ENCODE measurements at regions of chr3 and their contacts with region 1.

Region 1: DNA sequence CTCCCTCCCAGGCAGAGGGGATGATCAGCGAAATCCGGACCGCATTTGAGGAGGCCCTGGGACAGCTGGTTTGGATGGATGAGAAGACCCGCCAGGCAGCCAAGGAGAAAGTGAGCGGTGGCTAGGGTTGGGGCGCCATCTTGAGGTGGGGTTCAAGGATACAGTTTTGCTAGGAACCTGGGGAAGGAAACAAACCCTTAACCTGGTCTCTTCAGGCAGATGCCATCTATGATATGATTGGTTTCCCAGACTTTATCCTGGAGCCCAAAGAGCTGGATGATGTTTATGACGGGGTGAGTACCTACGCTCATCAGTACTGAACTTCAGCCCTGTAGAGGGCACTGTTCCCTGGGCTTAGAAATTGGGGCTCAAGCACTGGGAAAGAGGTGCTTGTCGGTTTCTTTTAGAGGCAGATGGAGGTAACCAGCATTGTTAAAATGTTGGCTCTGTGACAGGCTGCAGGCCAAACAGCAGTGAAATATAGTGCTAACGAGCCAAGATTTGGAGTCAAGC is 9.6 kb upstream of the PSMD2 start:
- DNase-seq: peak in 13 of 14 experiments; percentile 42 to 71 (median 50)
- ATAC-seq: peak; percentile 77
- H3K4me3 ChIP-seq: no peak overlapping the region
- H3K4me3 Mint-ChIP-seq: no peak overlapping the region
- H3K27ac ChIP-seq: no peak overlapping the region
- H3K27ac Mint-ChIP-seq: no peak overlapping the region
- H3K4me1 ChIP-seq: peaks cover 5% of the 10 kb centered on the region
- H3K4me1 Mint-ChIP-seq: no peaks in the 10 kb centered on the region
- H3K27me3 ChIP-seq: peaks cover 3% of the 10 kb centered on the region in 2 experiments
- H3K27me3 Mint-ChIP-seq: peaks cover 28% of the 10 kb centered on the region
- CTCF ChIP-seq: peak; percentile 68

Region 2: GRCh38 chr3:183895296-183895695 is 394.2 kb before region 1 on chr3:
- CTCF ChIA-PET with region 1: interaction called, 6 read pairs
- POLR2A ChIA-PET with region 1: no interaction called
- intact Hi-C with region 1: loop called (anchors 2 kb)
- DNase-seq: peak in 9 of 14 experiments; percentile 6 to 76 (median 20)
- ATAC-seq: peak; percentile 88
- H3K4me3 ChIP-seq: no peak overlapping the region
- H3K4me3 Mint-ChIP-seq: no peak overlapping the region
- H3K27ac ChIP-seq: no peak overlapping the region
- H3K27ac Mint-ChIP-seq: no peak overlapping the region
- H3K4me1 ChIP-seq: peaks cover 4% of the 10 kb centered on the region
- H3K4me1 Mint-ChIP-seq: no peaks in the 10 kb centered on the region
- H3K27me3 ChIP-seq: peaks cover 5 to 6% of the 10 kb centered on the region in 2 experiments
- H3K27me3 Mint-ChIP-seq: peaks cover 13% of the 10 kb centered on the region
- CTCF ChIP-seq: peak; percentile 75

Region 3: DNA sequence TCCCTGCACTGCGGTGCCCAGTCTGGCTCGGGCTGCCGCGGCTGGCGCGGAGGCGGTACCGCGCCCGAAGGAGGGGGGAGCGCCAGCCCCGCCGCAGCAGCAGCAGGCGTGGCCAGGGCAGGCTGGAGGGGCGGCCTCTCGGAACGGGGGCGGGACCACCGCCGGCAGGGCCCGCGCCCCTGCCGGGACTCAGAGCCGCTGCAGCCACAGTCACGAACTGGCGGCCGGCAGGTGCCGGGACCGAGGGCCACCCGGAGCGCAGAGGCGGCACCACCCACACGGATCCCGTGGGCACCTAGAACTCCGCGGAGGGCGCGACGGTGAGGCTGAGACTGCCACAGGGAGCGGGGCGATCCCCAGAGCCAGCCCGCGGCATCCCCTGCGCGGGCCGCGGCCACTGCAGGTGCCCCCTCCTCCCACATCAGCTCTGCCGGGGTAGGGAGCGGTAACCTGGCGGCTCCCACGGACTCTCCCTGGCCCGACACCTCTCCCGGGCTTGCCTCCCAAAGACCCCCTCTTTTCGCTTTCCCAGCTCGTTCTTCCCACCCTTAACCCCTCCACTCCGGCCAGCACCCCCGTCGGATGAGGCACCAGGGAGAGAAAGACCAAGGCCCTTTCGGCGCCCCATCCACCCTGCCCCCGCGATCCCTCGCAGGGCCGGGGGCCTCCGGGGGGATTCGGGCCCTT is 59.9 kb before region 1 on chr3 and contains the start of gene VWA5B2:
- CTCF ChIA-PET with region 1: interaction called, 16 read pairs
- POLR2A ChIA-PET with region 1: no interaction called
- intact Hi-C with region 1: loop called (anchors 1 to 5 kb)
- DNase-seq: peak; percentile 46 to 89 (median 64)
- ATAC-seq: peak; percentile 97
- H3K4me3 ChIP-seq: peak within 1 kb of the TSS; percentile 53
- H3K4me3 Mint-ChIP-seq: peak within 1 kb of the TSS; percentile 85
- H3K27ac ChIP-seq: no peak within 1 kb of the TSS
- H3K27ac Mint-ChIP-seq: no peak within 1 kb of the TSS
- H3K4me1 ChIP-seq: peaks cover 24% of the 10 kb centered on the region
- H3K4me1 Mint-ChIP-seq: peaks cover 14% of the 10 kb centered on the region
- H3K27me3 ChIP-seq: peaks cover 51 to 52% of the 10 kb centered on the region in 2 experiments
- H3K27me3 Mint-ChIP-seq: peaks cover 72% of the 10 kb centered on the region
- CTCF ChIP-seq: peak; percentile 23
- total RNA-seq, gene VWA5B2: not detected

Measured in CD4-positive, alpha-beta T cell (primary cell).